ENCODE measurements at regions of chr5 and their contacts with region 1.

Region 1: GRCh38 chr5:132495667-132496190 is 5.2 kb upstream of the IRF1 start:
- DNase-seq: peak; percentile 58 to 80 (median 66)
- ATAC-seq: peak; percentile 49 to 56
- H3K4me3 Mint-ChIP-seq: peak overlapping the region; percentile 92 to 98 (median 96)
- H3K27ac Mint-ChIP-seq: peak overlapping the region; percentile 90 to 99 (median 98)
- H3K4me1 Mint-ChIP-seq: peaks cover 28 to 81% (median 75%) of the 10 kb centered on the region in 4 donors
- H3K27me3 Mint-ChIP-seq: no peaks in the 10 kb centered on the region

Region 2: GRCh38 chr5:132394667-132395259 is 101.0 kb before region 1 on chr5:
- POLR2A ChIA-PET with region 1: interaction called, 96 read pairs
- DNase-seq: no peak
- ATAC-seq: peak in 1 of 2 donors; percentile 37
- H3K4me3 Mint-ChIP-seq: peak overlapping the region in 4 of 10 donors; percentile 2 to 14 (median 9)
- H3K27ac Mint-ChIP-seq: peak overlapping the region in 9 of 10 donors; percentile 48 to 92 (median 80)
- H3K4me1 Mint-ChIP-seq: peaks cover 24 to 71% (median 62%) of the 10 kb centered on the region in 4 donors
- H3K27me3 Mint-ChIP-seq: no peaks in the 10 kb centered on the region

Region 3: GRCh38 chr5:132419502-132420468 is 75.9 kb before region 1 on chr5:
- POLR2A ChIA-PET with region 1: interaction called, 142 read pairs
- DNase-seq: peak; percentile 27 to 78 (median 60)
- ATAC-seq: peak; percentile 65 to 69
- H3K4me3 Mint-ChIP-seq: peak overlapping the region; percentile 69 to 87 (median 78)
- H3K27ac Mint-ChIP-seq: peak overlapping the region; percentile 85 to 98 (median 94)
- H3K4me1 Mint-ChIP-seq: peaks cover 46 to 100% (median 91%) of the 10 kb centered on the region in 4 donors
- H3K27me3 Mint-ChIP-seq: no peaks in the 10 kb centered on the region

Region 4: GRCh38 chr5:132437604-132438266 is 58.0 kb before region 1 on chr5:
- POLR2A ChIA-PET with region 1: interaction called, 47 read pairs
- DNase-seq: peak; percentile 29 to 82 (median 52)
- ATAC-seq: peak; percentile 90 to 93
- H3K4me3 Mint-ChIP-seq: peak overlapping the region; percentile 38 to 77 (median 68)
- H3K27ac Mint-ChIP-seq: peak overlapping the region; percentile 84 to 94 (median 90)
- H3K4me1 Mint-ChIP-seq: peaks cover 47 to 95% (median 87%) of the 10 kb centered on the region in 4 donors
- H3K27me3 Mint-ChIP-seq: no peaks in the 10 kb centered on the region

Region 5: GRCh38 chr5:132466433-132467286 is 29.1 kb before region 1 on chr5:
- POLR2A ChIA-PET with region 1: interaction called, 648 read pairs
- DNase-seq: peak in 8 of 10 donors; percentile 40 to 79 (median 73)
- ATAC-seq: peak; percentile 78 to 79
- H3K4me3 Mint-ChIP-seq: peak overlapping the region; percentile 70 to 83 (median 76)
- H3K27ac Mint-ChIP-seq: peak overlapping the region; percentile 90 to 97 (median 95)
- H3K4me1 Mint-ChIP-seq: peaks cover 48 to 100% (median 96%) of the 10 kb centered on the region in 4 donors
- H3K27me3 Mint-ChIP-seq: no peaks in the 10 kb centered on the region

Measured in naive thymus-derived CD8-positive, alpha-beta T cell (primary cell).